ENCODE measurements at regions of chr5 and their contacts with region 1.

Region 1: GRCh38 chr5:143229896-143230675 is 173.4 kb downstream of the NR3C1 start:
- DNase-seq: peak; percentile 99
- ATAC-seq: peak; percentile 89
- H3K4me3 ChIP-seq: peak overlapping the region; percentile 34; the same call in 1 of the 2 replicates
- H3K27ac ChIP-seq: peak overlapping the region; percentile 90
- H3K4me1 ChIP-seq: peaks cover 29% of the 10 kb centered on the region
- H3K27me3 ChIP-seq: no peaks in the 10 kb centered on the region
- CTCF ChIP-seq: no peak
- EP300 ChIP-seq: peak; percentile 74 to 88; a peak in 2 of 4 replicates
- POLR2A ChIP-seq: peak; percentile 56; the same call in 1 of the 2 replicates
- RAD21 ChIP-seq: peak; percentile 50; the same call in 1 of the 2 replicates

Region 2: DNA sequence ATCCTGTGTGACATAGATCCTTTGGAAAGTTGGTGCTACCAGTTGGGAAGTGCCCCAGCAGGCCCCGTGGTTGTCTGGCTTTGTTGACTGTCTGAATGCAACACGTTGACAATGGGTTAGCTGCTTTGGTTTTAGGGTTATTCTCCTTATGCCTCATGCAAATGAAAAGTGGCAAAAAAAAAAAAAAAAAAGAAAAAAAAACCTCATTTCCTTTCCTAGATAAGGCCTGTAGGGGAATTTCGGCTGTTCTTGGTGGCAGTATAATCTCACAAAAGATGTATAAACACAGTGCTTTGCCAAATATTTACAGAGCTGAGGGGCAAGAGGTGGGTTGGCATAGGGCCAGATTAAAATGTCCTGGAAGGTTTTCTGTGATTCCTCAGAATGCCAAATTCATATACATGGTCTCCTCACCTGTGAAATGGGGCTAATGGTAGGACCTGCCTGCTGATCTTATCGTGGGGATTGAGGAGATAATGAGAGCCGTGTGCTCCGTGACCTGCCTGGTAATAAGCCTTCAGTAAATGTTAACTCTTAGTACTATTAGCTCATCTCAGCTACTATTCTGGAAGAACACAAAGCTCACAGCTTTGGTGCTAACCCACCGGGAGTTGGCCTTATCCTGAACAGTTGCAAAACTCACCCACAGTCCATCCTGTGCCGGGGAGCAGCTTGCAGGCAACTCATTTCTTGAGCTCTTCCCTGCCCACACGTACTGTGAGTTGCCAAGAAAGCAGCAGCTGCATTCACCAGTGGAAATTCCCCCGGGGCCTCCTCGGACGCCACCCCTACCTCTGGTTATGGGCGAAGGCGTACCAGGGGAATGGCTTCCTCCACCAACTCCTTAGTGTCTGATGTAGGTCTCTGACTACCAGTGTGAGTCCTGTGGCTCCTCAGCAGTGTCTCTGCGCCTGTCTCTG is 46.9 kb before region 1 on chr5:
- CTCF ChIA-PET with region 1: interaction called, 4 read pairs
- POLR2A ChIA-PET with region 1: interaction called, 5 read pairs
- RAD21 ChIA-PET with region 1: interaction called, 32 read pairs
- SMC1A ChIA-PET with region 1: interaction called, 25 read pairs
- in situ Hi-C with region 1: no loop called
- intact Hi-C with region 1: loop called (anchors 1 kb)
- DNase-seq: peak; percentile 84
- ATAC-seq: peak; percentile 82
- H3K4me3 ChIP-seq: peak overlapping the region; percentile 32; the same call in 1 of the 2 replicates
- H3K27ac ChIP-seq: peak overlapping the region; percentile 90
- H3K4me1 ChIP-seq: peaks cover 53% of the 10 kb centered on the region
- H3K27me3 ChIP-seq: no peaks in the 10 kb centered on the region
- CTCF ChIP-seq: peak in 2 of 3 experiments; percentile 4 to 12; a peak in 1 of 6 replicates
- EP300 ChIP-seq: peak; percentile 78 to 79
- POLR2A ChIP-seq: peak; percentile 46
- RAD21 ChIP-seq: 0 out of 2 replicates have a peak, but pooled peaks have one; percentile 32

Region 3: DNA sequence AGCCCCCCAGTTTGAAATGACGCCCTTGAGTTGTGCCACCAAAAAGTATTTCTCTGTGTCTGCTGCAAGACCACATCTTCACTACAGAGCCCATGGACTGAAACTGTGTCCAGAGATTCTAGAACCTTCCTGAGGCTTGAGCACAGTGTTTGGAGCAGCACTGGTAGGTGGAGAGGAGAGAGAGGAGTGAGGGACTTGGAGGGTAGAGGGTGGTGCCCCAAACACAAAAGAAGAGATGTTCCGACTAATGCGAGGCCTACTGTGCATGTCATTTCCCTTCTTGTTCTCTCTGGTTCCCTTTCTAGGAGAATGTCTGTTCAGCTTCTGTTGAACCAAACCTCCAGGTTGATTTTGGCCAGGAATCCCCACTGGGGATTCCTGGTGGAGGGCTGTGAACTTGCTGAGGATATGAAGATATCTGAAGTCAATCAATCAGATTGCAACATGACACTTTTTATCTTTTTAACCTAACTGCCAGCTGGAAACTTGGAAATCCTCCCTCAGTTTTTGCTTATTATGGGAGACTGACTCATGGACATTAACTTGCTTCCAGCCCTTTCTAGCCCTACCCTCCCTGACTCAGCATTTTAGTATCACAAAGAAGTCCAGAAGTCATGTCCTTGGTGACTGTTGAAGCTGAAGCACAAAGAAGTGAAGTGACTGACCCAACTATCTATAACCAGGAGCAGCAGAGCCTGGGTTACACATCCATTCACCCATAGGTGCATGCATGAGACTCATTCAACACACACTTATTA is 18.9 kb after region 1 on chr5:
- CTCF ChIA-PET with region 1: interaction called, 4 read pairs
- POLR2A ChIA-PET with region 1: interaction called, 10 read pairs
- RAD21 ChIA-PET with region 1: interaction called, 6 read pairs
- SMC1A ChIA-PET with region 1: interaction called, 60 read pairs
- in situ Hi-C with region 1: no loop called
- intact Hi-C with region 1: loop called (anchors 1 kb)
- DNase-seq: no peak
- ATAC-seq: no peak
- H3K4me3 ChIP-seq: no peak overlapping the region
- H3K27ac ChIP-seq: no peak overlapping the region
- H3K4me1 ChIP-seq: peaks cover 22% of the 10 kb centered on the region
- H3K27me3 ChIP-seq: no peaks in the 10 kb centered on the region
- CTCF ChIP-seq: no peak
- EP300 ChIP-seq: no peak
- POLR2A ChIP-seq: no peak
- RAD21 ChIP-seq: no peak

Region 4: DNA sequence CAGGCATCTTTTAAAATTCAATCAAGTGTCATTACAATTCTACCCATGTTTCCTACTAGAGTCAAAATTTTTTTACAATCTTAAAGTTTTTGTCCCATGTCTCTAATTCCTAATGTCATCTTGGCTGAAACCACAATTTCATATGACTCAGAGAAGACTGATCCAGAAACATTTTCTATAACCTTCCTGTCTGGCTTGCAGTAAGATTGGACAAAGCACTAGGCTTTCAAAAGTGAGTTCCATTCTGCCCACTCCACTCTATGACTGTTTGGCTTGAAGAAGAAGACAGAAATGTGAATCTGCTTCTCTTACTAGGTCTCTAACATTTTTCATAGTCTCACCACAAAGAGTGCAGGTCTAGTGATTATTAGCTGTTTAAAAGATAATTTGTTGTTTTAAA is 84.6 kb after region 1 on chr5:
- CTCF ChIA-PET with region 1: interaction called, 3 read pairs
- POLR2A ChIA-PET with region 1: no interaction called
- RAD21 ChIA-PET with region 1: interaction called, 7 read pairs
- SMC1A ChIA-PET with region 1: interaction called, 11 read pairs
- in situ Hi-C with region 1: no loop called
- intact Hi-C with region 1: no loop called
- DNase-seq: no peak
- ATAC-seq: peak; percentile 61
- H3K4me3 ChIP-seq: no peak overlapping the region
- H3K27ac ChIP-seq: 0 out of 2 replicates have a peak overlapping the region, but pooled peaks have one; percentile 7
- H3K4me1 ChIP-seq: peaks cover 16% of the 10 kb centered on the region; the same call in 1 of the 2 replicates
- H3K27me3 ChIP-seq: no peaks in the 10 kb centered on the region
- CTCF ChIP-seq: no peak
- EP300 ChIP-seq: no peak
- POLR2A ChIP-seq: no peak
- RAD21 ChIP-seq: no peak

Region 5: DNA sequence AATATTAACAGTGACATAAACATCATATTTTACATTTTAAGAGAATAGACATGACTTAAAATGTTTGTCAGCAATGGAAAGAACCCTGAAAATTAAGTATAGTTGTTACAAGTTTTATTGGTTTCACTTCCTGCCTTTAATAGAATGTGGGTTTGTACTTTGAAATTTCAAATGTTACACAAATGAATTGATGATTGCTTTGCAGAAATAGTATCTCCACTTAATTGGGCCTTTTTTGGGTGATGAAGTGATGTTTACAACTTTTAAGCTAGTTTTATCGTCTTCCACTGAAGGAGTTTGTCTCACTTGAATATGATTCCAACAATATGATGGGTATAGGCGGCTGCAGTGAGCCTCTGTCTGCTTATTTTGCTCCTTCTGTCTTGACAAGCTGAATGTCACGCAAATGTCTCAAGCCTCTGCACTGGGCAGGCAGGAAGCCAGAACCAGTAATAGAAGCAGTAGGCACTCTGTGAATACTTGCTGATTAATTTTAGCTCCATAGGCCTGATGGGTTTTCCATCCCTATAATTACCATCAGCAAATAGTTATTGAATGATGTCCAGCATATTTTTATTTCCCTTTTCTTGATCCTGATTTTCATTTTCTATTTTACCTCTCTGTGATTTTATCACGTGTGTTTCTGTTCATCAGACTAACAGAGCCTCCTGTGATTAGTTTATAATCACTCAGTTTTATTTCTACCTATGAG is 184.0 kb after region 1 on chr5:
- CTCF ChIA-PET with region 1: no interaction called
- POLR2A ChIA-PET with region 1: no interaction called
- RAD21 ChIA-PET with region 1: interaction called, 11 read pairs
- SMC1A ChIA-PET with region 1: interaction called, 3 read pairs
- in situ Hi-C with region 1: no loop called
- intact Hi-C with region 1: no loop called
- DNase-seq: no peak
- ATAC-seq: peak; percentile 71
- H3K4me3 ChIP-seq: peak overlapping the region; percentile 16; the same call in 1 of the 2 replicates
- H3K27ac ChIP-seq: peak overlapping the region; percentile 76
- H3K4me1 ChIP-seq: peaks cover 43% of the 10 kb centered on the region
- H3K27me3 ChIP-seq: no peaks in the 10 kb centered on the region
- CTCF ChIP-seq: no peak
- EP300 ChIP-seq: peak; percentile 21 to 63; a peak in 2 of 4 replicates
- POLR2A ChIP-seq: no peak
- RAD21 ChIP-seq: no peak

Region 6: GRCh38 chr5:143641549-143642356 is 411.7 kb after region 1 on chr5:
- CTCF ChIA-PET with region 1: no interaction called
- POLR2A ChIA-PET with region 1: no interaction called
- RAD21 ChIA-PET with region 1: no interaction called
- SMC1A ChIA-PET with region 1: no interaction called
- in situ Hi-C with region 1: no loop called
- intact Hi-C with region 1: no loop called
- DNase-seq: peak; percentile 31
- ATAC-seq: peak; percentile 90
- H3K4me3 ChIP-seq: no peak overlapping the region
- H3K27ac ChIP-seq: no peak overlapping the region
- H3K4me1 ChIP-seq: peaks cover 20% of the 10 kb centered on the region; the same call in 1 of the 2 replicates
- H3K27me3 ChIP-seq: no peaks in the 10 kb centered on the region
- CTCF ChIP-seq: no peak
- EP300 ChIP-seq: no peak
- POLR2A ChIP-seq: no peak
- RAD21 ChIP-seq: no peak

Region 7: DNA sequence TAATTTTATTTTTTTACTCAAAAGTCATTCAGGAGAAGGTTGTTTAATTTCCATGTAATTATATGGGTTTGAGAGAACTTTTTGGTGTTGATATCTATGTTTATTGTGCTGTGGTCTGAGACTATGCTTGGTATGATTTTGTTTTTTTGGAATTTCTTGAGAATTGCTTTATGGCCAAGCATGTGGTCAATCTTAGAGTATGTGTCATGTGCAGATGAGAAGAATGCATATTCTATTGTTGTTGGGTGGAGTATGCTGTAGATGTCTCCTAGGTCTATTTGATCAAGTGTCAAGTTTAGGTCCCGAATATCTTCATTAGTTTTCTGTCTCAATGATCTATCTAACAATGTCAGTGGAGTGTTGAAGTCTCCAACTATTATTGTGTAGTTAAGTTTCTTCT is 716.8 kb after region 1 on chr5:
- CTCF ChIA-PET with region 1: no interaction called
- POLR2A ChIA-PET with region 1: no interaction called
- RAD21 ChIA-PET with region 1: no interaction called
- SMC1A ChIA-PET with region 1: no interaction called
- in situ Hi-C with region 1: no loop called
- intact Hi-C with region 1: no loop called
- DNase-seq: no peak
- ATAC-seq: no peak
- H3K4me3 ChIP-seq: no peak overlapping the region
- H3K27ac ChIP-seq: no peak overlapping the region
- H3K4me1 ChIP-seq: no peaks in the 10 kb centered on the region
- H3K27me3 ChIP-seq: no peaks in the 10 kb centered on the region
- CTCF ChIP-seq: no peak
- EP300 ChIP-seq: no peak
- POLR2A ChIP-seq: no peak
- RAD21 ChIP-seq: no peak